CD4-positive, alpha-beta T cell (primary cell): ENCODE measurements at regions of chr13 and their contacts with region 1.

Region 1: DNA sequence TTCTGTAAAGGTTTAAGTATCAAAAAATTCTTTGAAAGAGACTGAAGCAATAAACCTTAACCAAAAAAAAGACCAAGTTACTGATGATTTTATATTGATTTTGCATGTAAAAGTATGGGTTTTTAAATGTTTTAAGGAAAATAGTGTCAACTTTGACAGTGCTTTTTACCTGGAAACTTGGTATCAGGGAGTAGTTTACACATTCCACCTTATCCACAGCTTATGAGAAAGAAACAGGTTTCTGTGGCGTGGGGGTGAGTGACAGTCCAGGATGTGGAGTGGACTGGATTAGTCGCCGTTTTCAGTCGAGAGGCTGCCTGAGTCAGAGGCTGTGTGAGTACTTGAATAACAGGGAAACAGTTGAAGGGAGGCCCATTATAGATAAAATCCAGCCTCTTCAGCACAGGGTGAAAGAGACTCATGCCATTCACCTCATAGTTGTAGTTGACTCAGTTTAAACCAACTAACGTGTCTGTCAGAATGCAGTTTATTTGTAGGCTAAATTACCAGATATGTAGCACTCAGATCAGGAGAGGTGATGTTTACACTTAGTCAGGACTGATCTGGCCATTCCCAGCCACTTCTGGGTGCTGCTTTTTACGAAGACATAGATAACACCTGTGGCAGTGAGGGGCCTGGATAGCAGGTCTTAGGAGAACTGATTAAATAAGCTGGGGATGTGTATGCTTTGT is 595 bp upstream of the GPR183 start:
- DNase-seq: peak in 10 of 14 experiments; percentile 36 to 79 (median 46)
- ATAC-seq: peak; percentile 35
- H3K4me3 ChIP-seq: peak overlapping the region; percentile 83
- H3K4me3 Mint-ChIP-seq: peak overlapping the region; percentile 97
- H3K27ac ChIP-seq: peak overlapping the region; percentile 46 to 80
- H3K27ac Mint-ChIP-seq: peak overlapping the region; percentile 89
- H3K4me1 ChIP-seq: peaks cover 59% of the 10 kb centered on the region
- H3K4me1 Mint-ChIP-seq: peaks cover 75% of the 10 kb centered on the region
- H3K27me3 ChIP-seq: no peaks in the 10 kb centered on the region
- H3K27me3 Mint-ChIP-seq: no peaks in the 10 kb centered on the region
- CTCF ChIP-seq: no peak

Region 2: GRCh38 chr13:99281811-99282263 is 26.0 kb before region 1 on chr13:
- CTCF ChIA-PET with region 1: no interaction called
- POLR2A ChIA-PET with region 1: interaction called, 27 read pairs
- intact Hi-C with region 1: loop called in 1 of 2 experiments (anchors 1 kb)
- DNase-seq: peak in 13 of 14 experiments; percentile 35 to 88 (median 56)
- ATAC-seq: peak; percentile 71
- H3K4me3 ChIP-seq: no peak overlapping the region
- H3K4me3 Mint-ChIP-seq: peak overlapping the region; percentile 55
- H3K27ac ChIP-seq: peak overlapping the region; percentile 80 to 90
- H3K27ac Mint-ChIP-seq: peak overlapping the region; percentile 100
- H3K4me1 ChIP-seq: peaks cover 71% of the 10 kb centered on the region
- H3K4me1 Mint-ChIP-seq: peaks cover 97% of the 10 kb centered on the region
- H3K27me3 ChIP-seq: no peaks in the 10 kb centered on the region
- H3K27me3 Mint-ChIP-seq: no peaks in the 10 kb centered on the region
- CTCF ChIP-seq: no peak

Region 3: DNA sequence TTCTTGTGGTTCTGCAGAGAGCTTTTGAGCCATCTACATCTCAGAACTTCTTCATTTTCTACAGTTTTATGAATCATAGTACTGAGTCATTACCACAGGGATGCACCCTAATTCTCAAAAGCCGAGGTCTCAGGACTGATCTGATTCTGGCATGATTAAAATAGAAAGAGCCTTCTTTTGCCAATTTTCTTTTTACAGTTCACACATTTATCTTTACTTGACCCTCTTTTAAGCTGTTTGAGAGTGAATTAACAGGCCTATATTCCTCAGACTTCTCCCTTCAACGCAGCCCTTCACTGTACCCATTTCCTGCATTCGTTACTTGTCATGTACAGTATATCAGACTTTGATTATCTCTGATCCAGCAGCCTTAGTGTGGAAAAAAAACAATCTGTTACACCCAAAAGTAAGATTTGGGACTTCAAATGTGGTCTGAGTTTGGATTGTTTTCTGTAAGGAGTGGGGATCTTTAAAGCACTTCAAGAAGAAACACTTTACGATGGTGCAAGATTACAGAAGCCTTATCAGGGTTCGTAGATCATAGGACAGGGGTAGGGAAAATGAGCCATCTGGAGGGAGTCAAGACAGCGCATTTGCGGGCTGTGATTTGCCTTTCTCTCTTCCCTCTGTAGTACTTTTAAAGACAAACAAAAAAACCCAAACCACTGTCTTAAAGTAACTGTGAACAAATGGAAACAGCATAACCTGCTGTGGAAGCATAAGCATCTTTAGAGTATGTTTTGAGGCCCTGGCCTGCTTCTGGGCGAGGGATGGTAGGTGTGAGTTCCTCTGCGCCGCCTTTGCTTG is 14.7 kb after region 1 on chr13:
- CTCF ChIA-PET with region 1: interaction called, 3 read pairs
- POLR2A ChIA-PET with region 1: interaction called, 17 read pairs
- intact Hi-C with region 1: loop called in 1 of 2 experiments (anchors 1 kb)
- DNase-seq: peak in 7 of 14 experiments; percentile 16 to 84 (median 57)
- ATAC-seq: peak; percentile 72
- H3K4me3 ChIP-seq: peak overlapping the region; percentile 19
- H3K4me3 Mint-ChIP-seq: peak overlapping the region; percentile 59
- H3K27ac ChIP-seq: peak overlapping the region; percentile 69 to 80
- H3K27ac Mint-ChIP-seq: peak overlapping the region; percentile 93
- H3K4me1 ChIP-seq: peaks cover 58% of the 10 kb centered on the region
- H3K4me1 Mint-ChIP-seq: peaks cover 83% of the 10 kb centered on the region
- H3K27me3 ChIP-seq: no peaks in the 10 kb centered on the region
- H3K27me3 Mint-ChIP-seq: no peaks in the 10 kb centered on the region
- CTCF ChIP-seq: no peak

Region 4: DNA sequence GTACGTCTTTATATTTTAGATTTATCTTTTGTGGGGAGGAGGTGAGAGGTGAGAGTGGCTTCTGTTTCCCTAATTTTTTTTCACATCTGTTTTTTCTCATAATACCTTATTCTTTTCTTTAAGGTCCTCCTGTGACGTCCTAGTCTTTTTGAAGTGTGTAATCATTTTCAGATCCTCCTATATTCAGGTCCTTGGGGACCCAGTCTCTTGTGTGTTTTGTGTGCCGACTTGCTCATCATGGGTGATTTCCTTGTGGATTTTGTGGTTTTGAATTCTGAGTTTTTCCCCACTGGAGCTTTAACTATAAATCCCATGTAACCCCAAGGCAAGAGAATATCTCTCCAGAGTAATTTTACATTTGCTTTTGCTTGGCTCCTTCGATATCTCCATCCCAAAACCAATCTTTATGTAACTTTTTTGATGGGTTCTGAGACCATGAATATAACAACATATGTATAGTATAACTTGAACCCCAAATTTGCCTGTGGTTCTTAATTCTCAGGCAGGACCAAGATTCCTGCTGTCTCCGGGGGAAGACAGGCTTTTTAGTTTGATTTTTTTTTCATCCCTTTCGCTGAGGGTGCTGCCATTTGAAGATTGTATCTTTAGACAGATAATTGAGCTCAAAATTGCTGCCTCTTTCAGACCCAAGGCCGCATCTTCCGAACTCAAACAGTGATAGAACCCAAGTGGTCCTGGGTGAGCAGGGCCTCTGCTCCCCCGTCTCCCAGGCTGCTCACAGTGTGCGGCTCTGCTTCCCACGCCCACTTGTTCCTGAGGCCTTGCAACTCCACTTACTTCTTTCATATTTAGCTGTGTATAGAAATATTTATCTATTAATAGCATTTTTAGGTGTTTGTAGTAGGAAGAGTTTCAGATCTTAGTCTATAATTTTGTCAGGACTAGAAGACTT is 58.5 kb after region 1 on chr13:
- CTCF ChIA-PET with region 1: interaction called, 3 read pairs
- POLR2A ChIA-PET with region 1: interaction called, 43 read pairs
- intact Hi-C with region 1: loop called in 1 of 2 experiments (anchors 2 kb)
- DNase-seq: peak in 2 of 14 experiments; percentile 31 to 58
- ATAC-seq: no peak
- H3K4me3 ChIP-seq: no peak overlapping the region
- H3K4me3 Mint-ChIP-seq: peak overlapping the region; percentile 79
- H3K27ac ChIP-seq: peak overlapping the region; percentile 25 to 65
- H3K27ac Mint-ChIP-seq: peak overlapping the region; percentile 97
- H3K4me1 ChIP-seq: peaks cover 54% of the 10 kb centered on the region
- H3K4me1 Mint-ChIP-seq: peaks cover 94% of the 10 kb centered on the region
- H3K27me3 ChIP-seq: no peaks in the 10 kb centered on the region
- H3K27me3 Mint-ChIP-seq: no peaks in the 10 kb centered on the region
- CTCF ChIP-seq: no peak

Region 5: DNA sequence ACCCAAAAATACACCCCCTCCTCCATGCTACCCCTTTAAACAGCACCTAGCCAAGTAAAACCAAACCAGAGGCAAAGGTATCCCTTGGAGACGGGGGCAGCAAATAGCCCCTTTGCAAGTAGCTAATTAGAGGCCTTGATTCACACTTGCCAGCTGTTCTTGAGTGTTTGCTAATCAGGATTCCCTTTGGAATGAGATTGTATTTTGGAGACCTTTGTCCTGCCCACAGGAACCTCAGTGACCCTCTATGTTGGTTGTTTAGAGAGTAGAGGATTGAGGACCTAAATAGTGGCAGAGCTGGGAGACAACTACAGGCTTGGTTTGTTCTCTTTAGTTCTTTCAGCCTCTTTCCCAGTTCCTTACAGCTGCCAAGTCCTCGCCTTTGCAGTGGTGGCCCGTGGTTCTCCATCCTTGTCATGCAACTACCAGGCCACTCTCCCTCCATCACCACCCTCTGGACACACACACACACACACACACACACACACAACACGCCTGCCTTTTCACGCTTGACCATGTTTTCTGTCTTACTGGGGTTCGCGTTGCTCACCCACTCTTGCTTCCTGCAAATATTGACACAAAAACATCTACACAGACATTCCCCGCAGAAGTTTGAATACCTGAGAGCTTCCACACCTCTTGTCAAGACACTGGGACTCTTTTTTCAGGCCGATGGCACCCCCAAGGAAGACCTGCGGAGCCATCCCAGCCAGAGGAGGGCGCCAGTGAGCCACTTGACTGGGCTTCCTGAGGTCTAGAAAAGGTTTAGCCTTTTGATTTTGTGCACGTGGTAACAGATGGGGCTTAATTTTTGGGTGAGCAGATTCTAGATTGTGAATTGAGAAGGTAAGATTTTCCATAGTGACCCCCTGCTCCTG is 79.4 kb after region 1 on chr13:
- CTCF ChIA-PET with region 1: interaction called, 8 read pairs
- POLR2A ChIA-PET with region 1: interaction called, 63 read pairs
- intact Hi-C with region 1: loop called in 1 of 2 experiments (anchors 2 kb)
- DNase-seq: peak; percentile 81 to 94 (median 88)
- ATAC-seq: peak; percentile 22
- H3K4me3 ChIP-seq: no peak overlapping the region
- H3K4me3 Mint-ChIP-seq: peak overlapping the region; percentile 21
- H3K27ac ChIP-seq: peak overlapping the region; percentile 31 to 57
- H3K27ac Mint-ChIP-seq: peak overlapping the region; percentile 88
- H3K4me1 ChIP-seq: peaks cover 67% of the 10 kb centered on the region
- H3K4me1 Mint-ChIP-seq: peaks cover 61% of the 10 kb centered on the region
- H3K27me3 ChIP-seq: no peaks in the 10 kb centered on the region
- H3K27me3 Mint-ChIP-seq: no peaks in the 10 kb centered on the region
- CTCF ChIP-seq: peak; percentile 88